Activated CD8-positive, alpha-beta T cell treated with anti-CD3 and anti-CD28 coated beads, Interleukin-2, amount 10 ng/mL, durations not matched to agents 7 days and 5 days (primary cell): ENCODE measurements at regions of chr2 and their contacts with region 1.

Region 1: GRCh38 chr2:68943581-68944568 is 8.8 kb downstream of the GKN2 start:
- DNase-seq: peak; percentile 68
- ATAC-seq: peak; percentile 75
- H3K4me3 Mint-ChIP-seq: no peak overlapping the region
- H3K27ac Mint-ChIP-seq: no peak overlapping the region
- H3K4me1 Mint-ChIP-seq: peaks cover 2% of the 10 kb centered on the region
- H3K27me3 Mint-ChIP-seq: peaks cover 41% of the 10 kb centered on the region

Region 2: GRCh38 chr2:68819556-68819955 is 124.3 kb before region 1 on chr2:
- CTCF ChIA-PET with region 1: no interaction called
- POLR2A ChIA-PET with region 1: no interaction called
- DNase-seq: no peak
- ATAC-seq: no peak
- H3K4me3 Mint-ChIP-seq: no peak overlapping the region
- H3K27ac Mint-ChIP-seq: peak overlapping the region; percentile 16
- H3K4me1 Mint-ChIP-seq: peaks cover 1% of the 10 kb centered on the region
- H3K27me3 Mint-ChIP-seq: no peaks in the 10 kb centered on the region

Region 3: DNA sequence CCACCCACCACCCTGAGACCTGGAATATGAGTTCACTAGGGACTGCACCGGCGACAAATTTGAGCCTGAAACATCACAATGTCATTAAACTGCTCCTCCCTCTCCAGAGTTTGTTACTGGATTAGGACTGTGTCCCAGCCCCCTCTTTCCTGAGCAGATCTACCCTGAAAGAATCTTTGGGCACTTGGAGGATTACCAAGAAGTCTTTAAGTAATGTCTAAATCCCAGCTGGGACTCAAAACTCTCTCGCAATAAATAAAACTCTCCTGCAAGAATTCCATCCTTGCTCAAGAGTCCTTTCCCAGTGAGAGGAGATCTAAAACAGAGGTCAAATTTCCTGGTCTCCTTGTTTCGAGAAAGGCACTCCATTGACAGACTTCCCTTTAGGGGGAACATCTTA is 12.1 kb before region 1 on chr2:
- CTCF ChIA-PET with region 1: interaction called, 29 read pairs
- POLR2A ChIA-PET with region 1: no interaction called
- DNase-seq: no peak
- ATAC-seq: no peak
- H3K4me3 Mint-ChIP-seq: no peak overlapping the region
- H3K27ac Mint-ChIP-seq: no peak overlapping the region
- H3K4me1 Mint-ChIP-seq: peaks cover 4% of the 10 kb centered on the region
- H3K27me3 Mint-ChIP-seq: peaks cover 9% of the 10 kb centered on the region